ENCODE measurements at regions of chr18 and their contacts with region 1.

Region 1: DNA sequence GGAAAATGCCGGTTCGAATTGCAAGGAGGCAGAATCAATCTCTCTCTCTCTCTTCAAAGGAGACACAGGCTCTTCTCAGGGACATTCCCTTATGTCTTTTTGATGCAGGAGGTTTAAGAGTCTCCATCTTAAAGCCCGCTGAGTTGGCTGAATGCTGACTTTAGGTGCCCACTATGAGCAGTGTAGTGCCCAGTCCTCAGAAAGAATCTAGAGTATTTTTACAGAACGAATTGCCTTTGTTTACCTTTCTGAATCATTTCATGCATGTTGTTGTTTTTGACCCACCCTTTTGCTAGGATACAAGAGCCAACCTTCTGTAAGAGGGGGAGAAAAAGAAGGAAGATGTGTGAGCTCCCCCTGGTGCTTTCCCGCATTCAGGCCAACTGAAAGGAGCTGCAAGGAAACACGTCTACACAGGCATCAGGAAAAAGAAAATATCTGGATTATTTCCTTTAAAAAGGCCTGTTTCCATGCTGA is 193.5 kb upstream of the TCF4 start:
- DNase-seq: no peak
- ATAC-seq: no peak
- H3K4me3 Mint-ChIP-seq: peak overlapping the region; percentile 87
- H3K27ac Mint-ChIP-seq: peak overlapping the region; percentile 97
- H3K4me1 Mint-ChIP-seq: peaks cover 33% of the 10 kb centered on the region
- H3K27me3 Mint-ChIP-seq: peaks cover 6% of the 10 kb centered on the region
- CTCF ChIP-seq: no peak

Region 2: GRCh38 chr18:55376387-55376786 is 405.1 kb before region 1 on chr18:
- CTCF ChIA-PET with region 1: no interaction called
- POLR2A ChIA-PET with region 1: no interaction called
- intact Hi-C with region 1: loop called (anchors 1 kb)
- DNase-seq: no peak
- ATAC-seq: peak; percentile 91
- H3K4me3 Mint-ChIP-seq: peak overlapping the region; percentile 13
- H3K27ac Mint-ChIP-seq: peak overlapping the region; percentile 87
- H3K4me1 Mint-ChIP-seq: peaks cover 41% of the 10 kb centered on the region
- H3K27me3 Mint-ChIP-seq: no peaks in the 10 kb centered on the region
- CTCF ChIP-seq: no peak

Region 3: GRCh38 chr18:55477499-55477859 is 304.0 kb before region 1 on chr18:
- CTCF ChIA-PET with region 1: no interaction called
- POLR2A ChIA-PET with region 1: interaction called, 8 read pairs
- intact Hi-C with region 1: loop called (anchors 5 kb)
- DNase-seq: peak; percentile 23
- ATAC-seq: peak; percentile 94
- H3K4me3 Mint-ChIP-seq: peak overlapping the region; percentile 97
- H3K27ac Mint-ChIP-seq: peak overlapping the region; percentile 93
- H3K4me1 Mint-ChIP-seq: peaks cover 21% of the 10 kb centered on the region
- H3K27me3 Mint-ChIP-seq: no peaks in the 10 kb centered on the region
- CTCF ChIP-seq: no peak

Region 4: GRCh38 chr18:55907453-55908175 is 126.1 kb after region 1 on chr18:
- CTCF ChIA-PET with region 1: no interaction called
- POLR2A ChIA-PET with region 1: no interaction called
- intact Hi-C with region 1: loop called (anchors 5 kb)
- DNase-seq: no peak
- ATAC-seq: peak; percentile 31
- H3K4me3 Mint-ChIP-seq: peak overlapping the region; percentile 56
- H3K27ac Mint-ChIP-seq: peak overlapping the region; percentile 25
- H3K4me1 Mint-ChIP-seq: peaks cover 34% of the 10 kb centered on the region
- H3K27me3 Mint-ChIP-seq: no peaks in the 10 kb centered on the region
- CTCF ChIP-seq: no peak

Region 5: DNA sequence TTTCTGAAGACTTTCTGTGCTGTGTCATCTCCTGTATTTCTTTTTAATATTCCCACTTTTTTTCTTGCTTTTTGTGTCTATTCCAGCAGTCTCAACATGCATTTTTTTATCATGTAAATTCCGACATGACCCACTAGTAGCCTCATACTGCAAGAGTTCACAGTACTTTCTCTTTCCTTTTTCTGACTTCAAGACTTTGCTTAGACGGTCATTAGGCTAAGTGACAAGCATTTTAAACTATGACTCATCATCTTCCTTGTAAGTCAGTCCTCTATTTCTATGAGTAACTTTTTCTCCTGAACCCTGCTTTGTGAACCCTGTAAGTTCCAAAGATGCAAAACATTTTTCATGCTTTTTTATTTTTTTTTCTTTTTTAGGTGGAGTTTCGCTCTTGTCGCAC is 475.7 kb after region 1 on chr18:
- CTCF ChIA-PET with region 1: no interaction called
- POLR2A ChIA-PET with region 1: no interaction called
- intact Hi-C with region 1: loop called (anchors 5 kb)
- DNase-seq: no peak
- ATAC-seq: peak; percentile 69
- H3K4me3 Mint-ChIP-seq: no peak overlapping the region
- H3K27ac Mint-ChIP-seq: no peak overlapping the region
- H3K4me1 Mint-ChIP-seq: peaks cover 18% of the 10 kb centered on the region
- H3K27me3 Mint-ChIP-seq: no peaks in the 10 kb centered on the region
- CTCF ChIP-seq: no peak

Region 6: DNA sequence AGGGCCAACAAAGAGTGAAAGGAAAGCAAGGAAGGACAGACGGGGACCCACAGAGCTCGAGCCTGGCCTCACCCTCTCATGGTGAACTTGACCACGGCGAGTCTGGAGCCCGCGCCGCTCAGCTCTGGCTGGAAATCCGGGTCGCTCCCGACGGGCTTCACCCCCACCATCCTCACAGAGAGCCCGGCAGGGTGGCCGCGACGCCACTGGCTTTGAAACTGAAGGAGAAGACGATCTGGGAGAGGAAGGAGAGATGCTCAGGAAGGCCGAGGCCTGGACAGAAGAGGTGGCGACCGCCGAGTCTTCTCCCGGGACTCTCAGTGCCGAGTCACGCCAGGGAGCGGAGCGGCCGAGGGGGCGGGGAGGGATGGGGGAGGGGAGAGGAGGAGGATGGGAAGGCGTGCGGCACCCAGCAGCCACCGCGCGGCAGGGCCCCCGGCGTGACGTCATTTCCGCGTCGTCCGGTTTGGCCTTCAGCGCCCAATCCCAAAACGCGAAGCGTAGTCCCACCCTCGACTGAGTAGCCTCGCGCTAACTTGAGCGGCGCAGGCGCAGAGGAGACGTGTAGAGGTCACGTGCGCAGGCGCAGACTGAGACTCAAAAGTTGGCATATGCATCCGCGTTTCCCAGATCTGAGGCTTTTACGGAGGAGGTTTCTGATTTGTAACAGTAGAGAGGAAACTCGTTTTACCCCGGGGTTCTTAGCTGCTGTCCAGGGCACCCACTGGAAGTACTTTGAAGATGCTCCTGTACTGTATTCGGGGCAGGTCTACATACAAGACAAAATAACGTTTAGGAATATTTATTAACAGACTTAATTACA is 857.0 kb after region 1 on chr18 and contains the start of gene TXNL1:
- CTCF ChIA-PET with region 1: no interaction called
- POLR2A ChIA-PET with region 1: interaction called, 3 read pairs
- intact Hi-C with region 1: loop called (anchors 5 kb)
- DNase-seq: peak; percentile 95
- ATAC-seq: peak; percentile 96
- H3K4me3 Mint-ChIP-seq: peak within 1 kb of the TSS; percentile 96
- H3K27ac Mint-ChIP-seq: peak within 1 kb of the TSS; percentile 99
- H3K4me1 Mint-ChIP-seq: peaks cover 52% of the 10 kb centered on the region
- H3K27me3 Mint-ChIP-seq: no peaks in the 10 kb centered on the region
- CTCF ChIP-seq: no peak
- total RNA-seq, gene TXNL1: 53.4 and 55.4 TPM in 2 replicates

Measured in activated B cell treated with CpG ODN at 0.5 μM for 24 hours (primary cell).